ENCODE measurements at regions of chr5 and their contacts with region 1.

Region 1: DNA sequence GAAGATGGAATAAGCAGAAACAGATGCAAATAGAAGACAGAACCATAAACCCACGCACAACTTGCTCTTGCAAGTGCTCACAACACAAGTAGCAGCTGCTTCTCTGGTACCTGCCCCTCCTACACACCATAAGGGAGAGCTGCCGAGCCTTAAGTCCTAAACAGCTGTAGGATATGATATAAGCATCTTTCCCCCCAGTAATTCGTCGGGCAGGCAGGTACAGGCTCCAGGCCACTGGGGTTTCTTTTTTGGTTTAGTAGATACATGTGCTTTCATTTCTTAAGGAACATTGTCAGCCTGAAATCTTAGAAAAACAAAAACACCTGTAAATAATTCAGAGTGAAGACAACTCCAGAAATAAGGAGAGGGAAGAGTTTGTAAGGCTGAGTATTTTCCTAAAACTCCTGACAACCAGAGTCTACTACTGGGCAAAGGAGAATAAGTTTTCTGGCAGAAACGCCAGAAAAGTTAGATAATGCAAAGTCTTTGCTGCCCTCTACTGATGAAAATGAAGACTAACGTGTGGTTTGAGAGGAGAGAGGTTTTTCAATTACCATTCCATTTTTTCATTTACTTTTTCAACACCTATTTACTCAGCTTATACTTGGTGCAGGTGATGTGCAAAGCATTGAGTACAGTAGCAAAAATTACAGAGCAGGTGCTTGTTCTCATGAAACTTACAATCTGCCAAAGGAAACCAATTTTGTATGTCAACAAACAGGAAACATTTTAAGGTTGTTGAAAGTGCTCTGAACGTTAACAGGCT is 20.1 kb upstream of the TCERG1 start:
- DNase-seq: no peak
- ATAC-seq: peak; percentile 61 to 67
- H3K4me3 ChIP-seq: no peak overlapping the region
- H3K27ac ChIP-seq: no peak overlapping the region
- H3K4me1 ChIP-seq: no peaks in the 10 kb centered on the region
- H3K27me3 ChIP-seq: peaks cover 4% of the 10 kb centered on the region
- CTCF ChIP-seq: peak; percentile 62

Region 2: DNA sequence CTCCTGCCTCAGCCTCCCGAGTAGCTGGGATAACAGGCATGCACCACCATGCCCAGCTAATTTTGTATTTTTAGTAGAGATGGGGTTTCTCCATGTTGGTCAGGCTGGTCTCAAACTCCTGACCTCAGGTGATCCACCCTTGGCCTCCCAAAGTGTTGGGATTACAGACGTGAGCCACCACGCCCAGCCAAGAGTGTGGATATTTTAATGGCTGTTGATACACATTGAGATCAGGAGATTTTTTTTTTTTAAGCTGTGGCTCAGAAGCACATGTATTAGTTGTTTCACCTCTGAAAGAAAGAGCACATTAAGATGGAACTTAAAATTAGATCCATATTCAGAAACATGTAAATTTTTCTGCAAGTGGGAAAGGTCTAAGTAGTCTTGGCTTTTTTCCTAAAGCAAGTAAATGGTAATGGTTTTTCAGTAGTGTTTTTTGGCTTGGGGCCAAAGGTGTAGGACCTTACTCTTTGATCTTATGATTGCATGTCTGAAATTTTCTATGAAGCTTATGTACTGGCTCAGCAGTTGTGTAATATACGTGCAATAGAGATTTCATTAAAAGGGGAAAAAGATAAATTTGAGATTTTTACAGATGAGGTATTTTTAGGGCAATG is 213.7 kb before region 1 on chr5:
- intact Hi-C with region 1: no loop called
- DNase-seq: no peak
- ATAC-seq: peak in 1 of 2 donors; percentile 60
- H3K4me3 ChIP-seq: no peak overlapping the region
- H3K27ac ChIP-seq: no peak overlapping the region
- H3K4me1 ChIP-seq: peaks cover 28% of the 10 kb centered on the region
- H3K27me3 ChIP-seq: no peaks in the 10 kb centered on the region
- CTCF ChIP-seq: no peak

Region 3: GRCh38 chr5:146291421-146292074 is 135.5 kb before region 1 on chr5:
- intact Hi-C with region 1: loop called (anchors 5 kb)
- DNase-seq: no peak
- ATAC-seq: peak; percentile 52 to 54
- H3K4me3 ChIP-seq: no peak overlapping the region
- H3K27ac ChIP-seq: no peak overlapping the region
- H3K4me1 ChIP-seq: no peaks in the 10 kb centered on the region
- H3K27me3 ChIP-seq: no peaks in the 10 kb centered on the region
- CTCF ChIP-seq: peak; percentile 49

Measured in lower lobe of right lung (tissue), 2 donors.